ENCODE measurements at regions of chr6 and their contacts with region 1.

Region 1: GRCh38 chr6:149060300-149060997 is 257.1 kb upstream of the TAB2 start:
- DNase-seq: peak; percentile 20
- ATAC-seq: peak; percentile 59
- H3K4me3 ChIP-seq: peak overlapping the region in 2 of 3 experiments; percentile 12 to 41; a peak in 3 of 6 replicates
- H3K27ac ChIP-seq: peak overlapping the region; percentile 65
- H3K4me1 ChIP-seq: peaks cover 61% of the 10 kb centered on the region
- H3K27me3 ChIP-seq: no peaks in the 10 kb centered on the region
- CTCF ChIP-seq: no peak
- EP300 ChIP-seq: no peak
- POLR2A ChIP-seq: no peak
- RAD21 ChIP-seq: no peak

Region 2: GRCh38 chr6:148973538-148974208 is 86.8 kb before region 1 on chr6:
- CTCF ChIA-PET with region 1: no interaction called
- POLR2A ChIA-PET with region 1: no interaction called
- in situ Hi-C with region 1: no loop called
- intact Hi-C with region 1: no loop called
- DNase-seq: no peak
- ATAC-seq: peak; percentile 51; the same call in 2 of the 3 replicates
- H3K4me3 ChIP-seq: no peak overlapping the region
- H3K27ac ChIP-seq: no peak overlapping the region
- H3K4me1 ChIP-seq: peaks cover 20% of the 10 kb centered on the region
- H3K27me3 ChIP-seq: peaks cover 0 to 20% of the 10 kb centered on the region in 2 experiments; a peak in 2 of 5 replicates
- CTCF ChIP-seq: peak; percentile 64
- EP300 ChIP-seq: no peak
- POLR2A ChIP-seq: no peak
- RAD21 ChIP-seq: peak; percentile 38; the same call in 1 of the 2 replicates

Region 3: GRCh38 chr6:148983966-148984365 is 76.5 kb before region 1 on chr6:
- CTCF ChIA-PET with region 1: no interaction called
- POLR2A ChIA-PET with region 1: no interaction called
- in situ Hi-C with region 1: no loop called
- intact Hi-C with region 1: no loop called
- DNase-seq: no peak
- ATAC-seq: no peak
- H3K4me3 ChIP-seq: no peak overlapping the region
- H3K27ac ChIP-seq: no peak overlapping the region
- H3K4me1 ChIP-seq: peaks cover 20% of the 10 kb centered on the region
- H3K27me3 ChIP-seq: peaks cover 3 to 32% of the 10 kb centered on the region in 2 experiments; a peak in 3 of 5 replicates
- CTCF ChIP-seq: no peak
- EP300 ChIP-seq: no peak
- POLR2A ChIP-seq: no peak
- RAD21 ChIP-seq: no peak

Region 4: DNA sequence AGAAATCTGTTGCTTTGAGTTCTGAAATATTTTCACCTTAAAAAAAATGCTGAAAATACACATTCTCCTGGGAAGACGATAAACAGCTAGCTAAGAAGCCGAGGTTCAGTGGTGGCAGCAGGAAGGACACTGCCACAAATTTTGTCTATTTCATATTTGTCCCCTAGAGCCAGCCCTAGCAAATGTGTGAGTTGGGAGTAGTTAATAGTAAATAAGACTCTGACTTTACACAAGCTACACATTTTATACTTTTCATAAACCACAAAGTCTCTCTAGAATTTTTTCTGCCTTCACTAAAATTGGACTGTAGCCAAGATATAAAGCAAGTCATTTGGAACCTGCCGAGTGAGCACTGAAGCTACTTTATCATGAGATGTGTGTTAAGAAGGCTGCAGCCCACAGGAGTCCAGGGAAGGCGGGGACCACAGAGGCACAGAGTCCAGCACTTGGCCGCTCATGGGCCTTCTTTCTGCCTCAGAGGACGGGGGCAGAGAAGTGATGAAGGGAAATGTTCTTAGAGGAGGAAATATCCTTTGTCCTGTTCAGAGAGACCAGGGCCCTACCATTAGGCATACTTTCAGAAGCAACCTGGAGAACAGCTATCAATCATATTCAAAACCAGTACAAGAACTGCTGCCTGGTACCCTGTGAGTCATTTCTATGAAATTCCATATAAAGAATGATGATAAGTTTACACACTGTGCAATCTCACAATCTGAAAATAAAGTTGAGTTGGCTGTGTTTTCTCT is 15.3 kb after region 1 on chr6:
- CTCF ChIA-PET with region 1: no interaction called
- POLR2A ChIA-PET with region 1: interaction called, 8 read pairs
- in situ Hi-C with region 1: no loop called
- intact Hi-C with region 1: loop called (anchors 2 kb)
- DNase-seq: no peak
- ATAC-seq: no peak
- H3K4me3 ChIP-seq: no peak overlapping the region
- H3K27ac ChIP-seq: peak overlapping the region; percentile 50
- H3K4me1 ChIP-seq: peaks cover 57% of the 10 kb centered on the region
- H3K27me3 ChIP-seq: no peaks in the 10 kb centered on the region
- CTCF ChIP-seq: no peak
- EP300 ChIP-seq: no peak
- POLR2A ChIP-seq: no peak
- RAD21 ChIP-seq: no peak

Measured in HepG2 (cell line).